ENCODE measurements at regions of chr3 and their contacts with region 1.

Region 1: DNA sequence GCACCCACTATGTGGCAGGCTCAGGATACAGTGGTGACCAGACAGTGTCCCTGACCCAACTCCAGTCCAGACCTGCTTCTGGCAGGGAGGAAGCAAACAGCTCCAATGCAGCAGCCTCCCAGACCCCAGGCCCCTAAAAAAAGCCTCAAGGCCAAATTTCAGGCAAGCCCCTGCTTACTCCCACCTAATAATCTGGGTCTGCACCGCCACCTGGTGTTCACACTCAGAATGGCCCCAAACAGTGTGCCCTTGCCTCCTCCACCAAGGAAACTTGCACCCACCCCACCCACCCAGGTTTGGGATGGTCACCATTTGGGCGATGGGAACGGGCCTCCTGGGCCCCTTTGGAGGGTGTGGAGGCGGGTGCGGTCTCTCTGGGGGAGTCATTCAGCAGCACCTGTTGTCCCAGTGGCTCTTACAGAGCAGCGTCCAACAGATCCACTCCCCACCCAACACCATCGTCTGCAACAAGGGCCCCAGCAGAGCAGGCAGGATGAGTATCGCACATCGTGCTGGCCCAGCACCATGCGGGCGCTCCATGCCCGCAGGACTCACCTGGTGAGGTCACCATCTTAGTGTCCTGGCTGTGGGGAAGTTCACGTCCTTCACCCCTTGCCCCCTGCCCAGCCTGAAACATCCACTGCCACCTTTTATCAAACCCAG is 17.3 kb downstream of the C3orf18 start:
- DNase-seq: peak; percentile 61
- H3K4me3 Mint-ChIP-seq: no peak overlapping the region
- H3K27ac Mint-ChIP-seq: no peak overlapping the region
- H3K4me1 Mint-ChIP-seq: no peaks in the 10 kb centered on the region
- H3K27me3 Mint-ChIP-seq: no peaks in the 10 kb centered on the region
- CTCF ChIP-seq: peak; percentile 87

Region 2: GRCh38 chr3:50350527-50351322 is 199.5 kb before region 1 on chr3 and contains the starts of genes CYB561D2 and NPRL2:
- CTCF ChIA-PET with region 1: interaction called, 46 read pairs
- POLR2A ChIA-PET with region 1: interaction called, 3 read pairs
- intact Hi-C with region 1: no loop called
- DNase-seq: peak; percentile 95
- H3K4me3 Mint-ChIP-seq: peak within 1 kb of the TSS; percentile 87
- H3K27ac Mint-ChIP-seq: peak within 1 kb of the TSS; percentile 95
- H3K4me1 Mint-ChIP-seq: peaks cover 26% of the 10 kb centered on the region
- H3K27me3 Mint-ChIP-seq: no peaks in the 10 kb centered on the region
- CTCF ChIP-seq: no peak
- total RNA-seq, gene CYB561D2: 24.0 and 24.1 TPM in 2 replicates
- total RNA-seq, gene NPRL2: 21.1 and 22.1 TPM in 2 replicates

Region 3: GRCh38 chr3:50370594-50370993 is 179.6 kb before region 1 on chr3:
- CTCF ChIA-PET with region 1: interaction called, 15 read pairs
- POLR2A ChIA-PET with region 1: interaction called, 3 read pairs
- intact Hi-C with region 1: no loop called
- DNase-seq: peak; percentile 50
- H3K4me3 Mint-ChIP-seq: no peak overlapping the region
- H3K27ac Mint-ChIP-seq: no peak overlapping the region
- H3K4me1 Mint-ChIP-seq: peaks cover 6% of the 10 kb centered on the region
- H3K27me3 Mint-ChIP-seq: peaks cover 33% of the 10 kb centered on the region
- CTCF ChIP-seq: no peak

Region 4: DNA sequence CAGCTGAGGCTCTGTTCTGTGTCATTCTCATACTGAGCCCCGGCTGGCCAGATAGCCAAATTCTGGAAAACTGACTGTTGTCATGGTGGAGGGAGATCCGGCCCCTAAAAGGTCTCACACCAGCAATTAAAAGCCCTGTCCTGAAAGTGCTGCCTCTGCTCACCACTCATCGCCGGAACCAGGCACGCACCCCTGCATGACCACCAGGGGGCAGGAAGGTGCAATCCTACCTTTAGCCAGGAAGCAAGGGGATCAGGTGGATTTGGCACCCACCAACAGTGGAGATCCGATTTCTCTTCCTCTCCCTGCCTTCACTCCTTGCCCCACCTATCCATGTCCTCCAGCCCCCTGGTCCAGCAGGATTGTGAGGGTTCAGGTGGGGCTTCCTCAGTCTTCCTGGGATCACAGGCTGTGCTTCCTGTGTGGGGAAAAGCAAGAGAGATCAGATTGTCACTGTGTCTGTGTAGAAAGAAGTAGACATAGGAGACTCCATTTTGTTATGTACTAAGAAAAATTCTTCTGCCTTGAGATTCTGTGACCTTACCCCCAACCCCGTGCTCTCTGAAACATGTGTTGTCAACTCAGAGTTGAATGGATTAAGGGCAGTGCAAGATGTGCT is 30.6 kb before region 1 on chr3:
- CTCF ChIA-PET with region 1: interaction called, 32 read pairs
- POLR2A ChIA-PET with region 1: no interaction called
- intact Hi-C with region 1: loop called (anchors 1 kb)
- DNase-seq: peak; percentile 61
- H3K4me3 Mint-ChIP-seq: no peak overlapping the region
- H3K27ac Mint-ChIP-seq: no peak overlapping the region
- H3K4me1 Mint-ChIP-seq: no peaks in the 10 kb centered on the region
- H3K27me3 Mint-ChIP-seq: peaks cover 39% of the 10 kb centered on the region
- CTCF ChIP-seq: peak; percentile 86

Region 5: DNA sequence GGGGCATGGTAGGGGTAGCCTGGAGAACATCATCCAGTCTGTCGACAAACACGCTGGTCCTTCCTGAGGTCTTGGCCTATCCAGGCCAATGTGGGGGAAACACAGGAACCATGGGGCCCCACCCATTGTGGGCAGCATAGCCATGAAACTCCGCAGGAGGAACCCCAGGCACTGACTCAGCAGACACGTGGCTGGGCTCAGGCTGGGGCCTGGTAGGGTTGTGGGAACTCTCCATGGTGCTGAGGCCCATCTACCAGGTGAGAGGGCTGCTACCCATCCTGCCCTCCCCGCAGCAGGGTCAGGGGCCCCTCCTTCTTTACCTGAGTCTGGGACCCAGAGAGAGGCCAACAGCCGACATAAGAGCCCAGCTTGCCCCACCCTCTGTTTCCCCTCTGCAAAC is 24.2 kb before region 1 on chr3:
- CTCF ChIA-PET with region 1: interaction called, 32 read pairs
- POLR2A ChIA-PET with region 1: no interaction called
- intact Hi-C with region 1: no loop called
- DNase-seq: peak; percentile 71
- H3K4me3 Mint-ChIP-seq: no peak overlapping the region
- H3K27ac Mint-ChIP-seq: no peak overlapping the region
- H3K4me1 Mint-ChIP-seq: no peaks in the 10 kb centered on the region
- H3K27me3 Mint-ChIP-seq: peaks cover 21% of the 10 kb centered on the region
- CTCF ChIP-seq: no peak

Region 6: GRCh38 chr3:50536471-50537180 is 13.6 kb before region 1 on chr3:
- CTCF ChIA-PET with region 1: interaction called, 53 read pairs
- POLR2A ChIA-PET with region 1: interaction called, 3 read pairs
- intact Hi-C with region 1: no loop called
- DNase-seq: no peak
- H3K4me3 Mint-ChIP-seq: no peak overlapping the region
- H3K27ac Mint-ChIP-seq: no peak overlapping the region
- H3K4me1 Mint-ChIP-seq: peaks cover 10% of the 10 kb centered on the region
- H3K27me3 Mint-ChIP-seq: peaks cover 72% of the 10 kb centered on the region
- CTCF ChIP-seq: no peak